GM12878 (cell line): ENCODE measurements at regions of chr7 and their contacts with region 1.

Region 1: DNA sequence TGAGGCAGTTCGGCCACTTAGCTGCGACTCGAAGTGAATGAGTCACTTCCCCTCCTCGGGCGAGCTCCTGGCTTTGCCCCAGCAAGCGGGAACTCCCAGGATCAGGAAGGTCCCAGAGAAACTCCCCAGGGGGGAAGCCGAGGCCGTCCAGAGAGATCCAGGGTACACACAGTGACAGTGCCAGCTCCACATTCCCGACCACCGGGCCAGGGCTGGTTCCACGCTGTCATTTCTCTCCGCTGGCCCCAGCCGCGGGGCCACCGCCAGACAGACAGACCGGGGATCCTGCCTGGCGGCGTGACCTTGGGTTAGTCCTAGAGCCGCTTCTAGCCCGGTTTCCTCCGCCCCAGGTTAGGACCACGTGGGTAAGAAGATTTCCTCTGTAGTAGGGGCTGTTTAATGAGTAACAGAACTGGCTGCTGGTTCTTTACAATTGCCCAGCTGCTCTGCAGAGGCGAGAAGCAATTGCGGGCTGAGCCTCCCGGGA is 463 bp upstream of the UPP1 start:
- DNase-seq: peak; percentile 76
- ATAC-seq: peak; percentile 76
- H3K4me3 ChIP-seq: peak overlapping the region; percentile 73
- H3K27ac ChIP-seq: peak overlapping the region; percentile 89
- H3K4me1 ChIP-seq: peaks cover 38% of the 10 kb centered on the region
- H3K27me3 ChIP-seq: no peaks in the 10 kb centered on the region; a peak in 1 of 4 replicates
- CTCF ChIP-seq: no peak
- EP300 ChIP-seq: no peak
- POLR2A ChIP-seq: peak; percentile 76
- RAD21 ChIP-seq: no peak

Region 2: DNA sequence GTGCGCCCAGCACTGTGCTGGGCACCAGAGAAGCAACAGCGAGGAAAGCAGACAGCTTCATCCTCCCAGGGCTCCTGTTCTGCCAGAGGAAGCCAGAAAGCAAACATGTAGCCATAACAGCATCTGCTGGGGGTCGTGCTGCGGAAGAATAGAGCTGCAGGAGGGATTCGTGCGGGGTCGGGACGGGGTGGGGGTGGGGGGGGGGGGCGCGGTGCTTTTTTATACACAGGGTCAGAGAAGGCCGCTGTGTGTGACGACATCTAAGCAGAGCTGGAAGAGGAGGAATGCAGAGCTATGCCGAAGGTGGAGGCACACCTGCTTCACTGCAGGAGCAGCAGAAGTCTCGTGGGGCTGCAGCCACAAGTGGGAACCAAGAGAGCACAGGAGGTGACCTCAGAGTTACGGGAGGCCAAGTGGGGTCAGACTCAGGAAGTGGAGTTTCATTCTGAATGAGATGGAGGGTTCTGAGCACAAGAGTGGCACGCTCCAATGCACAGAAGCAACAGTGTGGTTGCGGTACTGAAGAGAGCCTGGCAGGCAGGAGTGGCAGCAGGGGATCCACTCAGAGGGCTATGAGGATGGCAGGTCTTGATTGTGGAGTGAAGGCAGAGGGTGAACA is 151.4 kb before region 1 on chr7:
- CTCF ChIA-PET with region 1: interaction called, 6 read pairs
- POLR2A ChIA-PET with region 1: no interaction called
- RAD21 ChIA-PET with region 1: interaction called, 17 read pairs
- SMC1A ChIA-PET with region 1: no interaction called
- in situ Hi-C with region 1: no loop called
- intact Hi-C with region 1: loop called (anchors 1 kb)
- DNase-seq: peak; percentile 91
- ATAC-seq: peak; percentile 98
- H3K4me3 ChIP-seq: peak overlapping the region; percentile 9; the same call in 1 of the 2 replicates
- H3K27ac ChIP-seq: peak overlapping the region; percentile 68
- H3K4me1 ChIP-seq: peaks cover 28% of the 10 kb centered on the region
- H3K27me3 ChIP-seq: peaks cover 0 to 1% of the 10 kb centered on the region in 2 experiments; a peak in 2 of 4 replicates
- CTCF ChIP-seq: no peak
- EP300 ChIP-seq: peak; percentile 94 to 98
- POLR2A ChIP-seq: peak; percentile 58; the same call in 1 of the 2 replicates
- RAD21 ChIP-seq: no peak

Region 3: GRCh38 chr7:47979145-47979831 is 109.3 kb before region 1 on chr7 and contains the start of gene HUS1:
- CTCF ChIA-PET with region 1: no interaction called
- POLR2A ChIA-PET with region 1: interaction called, 3 read pairs
- RAD21 ChIA-PET with region 1: interaction called, 4 read pairs
- SMC1A ChIA-PET with region 1: interaction called, 4 read pairs
- in situ Hi-C with region 1: no loop called
- intact Hi-C with region 1: loop called (anchors 2 kb)
- DNase-seq: peak; percentile 68
- ATAC-seq: peak; percentile 99
- H3K4me3 ChIP-seq: peak within 1 kb of the TSS; percentile 73
- H3K27ac ChIP-seq: peak within 1 kb of the TSS; percentile 82
- H3K4me1 ChIP-seq: peaks cover 4% of the 10 kb centered on the region; the same call in 1 of the 2 replicates
- H3K27me3 ChIP-seq: no peaks in the 10 kb centered on the region
- CTCF ChIP-seq: no peak
- EP300 ChIP-seq: no peak
- POLR2A ChIP-seq: peak; percentile 98
- RAD21 ChIP-seq: no peak
- polyA plus RNA-seq, gene HUS1: 26.4 to 35.5 TPM

Region 4: DNA sequence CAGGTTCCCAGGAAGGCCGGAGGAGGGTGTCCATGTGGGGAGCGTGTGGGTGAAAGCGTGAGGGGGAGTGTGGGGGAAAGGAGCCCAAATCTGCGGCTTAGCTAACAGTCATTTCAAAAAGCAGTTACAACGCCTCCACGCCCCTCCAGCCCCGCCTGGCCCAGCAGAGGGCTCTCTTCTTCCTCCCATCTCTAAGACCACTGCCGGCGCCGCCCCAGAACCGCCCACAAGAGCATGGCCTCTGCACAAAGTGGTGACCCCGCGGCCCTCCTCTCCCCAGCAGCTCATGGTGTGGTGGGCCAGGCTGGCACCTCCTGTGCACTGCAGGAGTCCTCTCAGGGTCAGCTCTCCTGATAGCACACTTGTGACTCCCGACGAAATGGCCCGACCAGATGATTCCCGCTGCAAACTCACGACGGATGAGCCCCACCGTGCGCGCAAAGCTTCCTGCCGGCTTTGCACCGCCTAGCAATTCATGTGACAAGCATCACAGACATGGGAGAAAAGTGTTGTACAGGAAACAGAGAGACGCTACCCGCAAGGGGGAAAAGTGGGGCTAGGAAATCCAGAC is 96.8 kb before region 1 on chr7:
- CTCF ChIA-PET with region 1: interaction called, 17 read pairs
- POLR2A ChIA-PET with region 1: interaction called, 8 read pairs
- RAD21 ChIA-PET with region 1: interaction called, 15 read pairs
- SMC1A ChIA-PET with region 1: interaction called, 12 read pairs
- in situ Hi-C with region 1: no loop called
- intact Hi-C with region 1: loop called (anchors 2 kb)
- DNase-seq: peak; percentile 39
- ATAC-seq: peak; percentile 100
- H3K4me3 ChIP-seq: peak overlapping the region; percentile 67; the same call in 1 of the 2 replicates
- H3K27ac ChIP-seq: no peak overlapping the region
- H3K4me1 ChIP-seq: peaks cover 5% of the 10 kb centered on the region; the same call in 1 of the 2 replicates
- H3K27me3 ChIP-seq: no peaks in the 10 kb centered on the region
- CTCF ChIP-seq: peak; percentile 76 to 91 (median 82)
- EP300 ChIP-seq: no peak
- POLR2A ChIP-seq: peak; percentile 72
- RAD21 ChIP-seq: peak; percentile 80

Region 5: DNA sequence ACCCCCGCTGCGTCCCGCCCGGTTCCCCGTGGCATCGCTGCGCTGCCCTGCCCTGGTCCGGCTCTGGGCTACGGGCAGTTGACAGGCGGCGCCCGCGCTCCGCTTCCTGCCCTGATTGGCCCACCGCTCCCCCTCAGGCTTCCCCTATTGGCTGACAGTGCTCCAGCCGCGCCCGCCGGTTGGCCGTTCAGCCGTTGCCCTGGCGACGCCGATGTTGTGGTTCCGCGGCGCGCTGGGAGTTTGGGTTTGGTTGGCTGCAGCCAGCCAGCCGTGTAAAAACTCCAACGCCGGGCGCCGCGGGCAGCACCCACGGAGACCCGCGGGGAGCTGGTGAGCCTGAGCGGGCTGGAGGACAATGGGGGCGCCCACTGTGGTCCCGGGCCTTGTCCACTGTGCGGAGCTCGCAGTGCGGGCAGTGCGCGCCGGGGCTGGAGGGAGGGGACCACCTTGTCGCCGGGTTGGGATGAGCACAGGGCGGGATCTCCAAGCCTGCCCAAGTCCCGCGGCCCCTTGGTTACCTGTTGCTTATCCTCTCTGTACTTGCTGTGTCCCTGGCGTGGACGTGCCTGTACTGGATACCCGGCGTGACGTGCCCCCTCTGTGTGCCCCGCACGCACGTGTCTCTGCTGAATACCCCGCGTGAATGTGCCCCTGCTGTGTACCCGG is 53.2 kb before region 1 on chr7 and contains the start of gene C7orf57:
- CTCF ChIA-PET with region 1: no interaction called
- POLR2A ChIA-PET with region 1: no interaction called
- RAD21 ChIA-PET with region 1: no interaction called
- SMC1A ChIA-PET with region 1: no interaction called
- in situ Hi-C with region 1: no loop called
- intact Hi-C with region 1: no loop called
- DNase-seq: no peak
- ATAC-seq: peak; percentile 90
- H3K4me3 ChIP-seq: no peak within 1 kb of the TSS
- H3K27ac ChIP-seq: no peak within 1 kb of the TSS
- H3K4me1 ChIP-seq: peaks cover 3% of the 10 kb centered on the region; the same call in 1 of the 2 replicates
- H3K27me3 ChIP-seq: peaks cover 8 to 9% of the 10 kb centered on the region in 2 experiments
- CTCF ChIP-seq: no peak
- EP300 ChIP-seq: no peak
- POLR2A ChIP-seq: no peak
- RAD21 ChIP-seq: no peak
- polyA plus RNA-seq, gene C7orf57: 0.07 to 0.21 TPM

Region 6: GRCh38 chr7:48101968-48102367 is 13.4 kb after region 1 on chr7:
- CTCF ChIA-PET with region 1: interaction called, 56 read pairs
- POLR2A ChIA-PET with region 1: interaction called, 3 read pairs
- RAD21 ChIA-PET with region 1: interaction called, 3 read pairs
- SMC1A ChIA-PET with region 1: interaction called, 4 read pairs
- in situ Hi-C with region 1: no loop called
- intact Hi-C with region 1: no loop called
- DNase-seq: no peak
- ATAC-seq: peak; percentile 41
- H3K4me3 ChIP-seq: no peak overlapping the region
- H3K27ac ChIP-seq: no peak overlapping the region
- H3K4me1 ChIP-seq: no peaks in the 10 kb centered on the region
- H3K27me3 ChIP-seq: no peaks in the 10 kb centered on the region
- CTCF ChIP-seq: peak in 2 of 3 experiments; percentile 6 to 37; a peak in 2 of 6 replicates
- EP300 ChIP-seq: no peak
- POLR2A ChIP-seq: no peak
- RAD21 ChIP-seq: no peak

Region 7: DNA sequence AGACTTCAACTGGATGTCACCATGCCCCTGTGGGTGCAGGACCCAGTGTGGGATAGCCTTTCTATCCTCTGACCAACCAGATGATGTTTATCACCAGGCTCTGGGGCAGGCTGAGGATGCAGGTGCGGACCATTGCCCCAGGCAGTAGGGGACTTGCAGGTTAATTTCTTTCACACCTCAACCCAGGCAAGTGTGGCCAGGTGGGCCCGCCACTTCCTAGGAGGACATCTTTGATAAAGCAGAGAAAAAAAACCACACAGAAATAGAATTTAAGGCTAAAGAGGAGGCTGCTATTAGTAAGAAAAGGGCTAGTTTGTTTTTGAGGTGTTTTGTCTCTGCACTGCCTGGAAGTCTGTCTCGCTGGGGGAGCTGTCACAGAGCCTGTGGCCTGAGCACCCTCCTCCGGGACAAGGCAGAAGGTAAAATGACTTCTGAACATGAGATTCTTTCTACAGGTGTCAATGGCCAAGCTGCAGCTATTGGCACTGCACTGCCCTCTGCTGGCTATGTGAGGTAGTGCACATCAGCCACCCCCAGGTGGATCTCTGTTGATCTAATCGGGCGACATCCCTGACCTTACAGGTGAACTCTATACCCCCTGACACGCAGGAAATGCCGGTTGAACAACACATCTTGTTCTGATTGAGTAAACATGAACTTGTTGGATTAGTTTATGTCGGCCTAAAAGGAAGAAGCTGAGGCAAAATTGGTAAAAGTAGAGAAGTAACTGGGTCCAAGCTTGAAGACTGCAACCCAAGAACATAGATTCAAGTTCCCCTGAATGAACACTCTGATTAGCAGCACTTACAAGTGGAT is 21.5 kb after region 1 on chr7:
- CTCF ChIA-PET with region 1: interaction called, 56 read pairs
- POLR2A ChIA-PET with region 1: interaction called, 4 read pairs
- RAD21 ChIA-PET with region 1: interaction called, 11 read pairs
- SMC1A ChIA-PET with region 1: interaction called, 8 read pairs
- in situ Hi-C with region 1: no loop called
- intact Hi-C with region 1: no loop called
- DNase-seq: peak; percentile 46
- ATAC-seq: peak; percentile 97
- H3K4me3 ChIP-seq: no peak overlapping the region
- H3K27ac ChIP-seq: no peak overlapping the region
- H3K4me1 ChIP-seq: no peaks in the 10 kb centered on the region
- H3K27me3 ChIP-seq: no peaks in the 10 kb centered on the region
- CTCF ChIP-seq: peak; percentile 96 to 99 (median 98)
- EP300 ChIP-seq: no peak
- POLR2A ChIP-seq: no peak
- RAD21 ChIP-seq: peak; percentile 99

Region 8: DNA sequence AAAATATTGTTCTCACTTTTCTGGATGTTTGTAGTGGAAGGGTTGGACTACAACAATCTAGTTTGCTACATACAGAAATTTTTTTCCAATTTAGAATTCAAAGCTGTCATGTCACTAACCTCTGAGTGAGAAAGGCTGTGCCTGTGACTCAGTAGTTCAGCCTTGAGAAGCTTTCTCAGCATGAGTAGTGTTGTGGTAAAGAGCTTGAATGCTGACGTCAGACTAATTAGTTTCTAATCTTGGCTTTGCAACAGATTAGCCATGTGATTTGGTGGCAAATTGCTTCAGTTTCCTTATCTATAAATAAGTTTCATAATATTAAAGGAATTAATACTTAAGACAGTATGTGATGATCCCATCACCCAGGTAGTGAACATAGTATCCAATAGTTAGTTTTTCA is 166.4 kb after region 1 on chr7:
- CTCF ChIA-PET with region 1: no interaction called
- POLR2A ChIA-PET with region 1: no interaction called
- RAD21 ChIA-PET with region 1: interaction called, 5 read pairs
- SMC1A ChIA-PET with region 1: no interaction called
- in situ Hi-C with region 1: no loop called
- intact Hi-C with region 1: loop called (anchors 2 kb)
- DNase-seq: peak; percentile 7
- ATAC-seq: peak; percentile 76
- H3K4me3 ChIP-seq: no peak overlapping the region
- H3K27ac ChIP-seq: no peak overlapping the region
- H3K4me1 ChIP-seq: peaks cover 7% of the 10 kb centered on the region; the same call in 1 of the 2 replicates
- H3K27me3 ChIP-seq: no peaks in the 10 kb centered on the region
- CTCF ChIP-seq: no peak
- EP300 ChIP-seq: no peak; a peak in 1 of 4 replicates
- POLR2A ChIP-seq: no peak
- RAD21 ChIP-seq: no peak